B cell (primary cell): ENCODE measurements at regions of chr20 and their contacts with region 1.

Region 1: DNA sequence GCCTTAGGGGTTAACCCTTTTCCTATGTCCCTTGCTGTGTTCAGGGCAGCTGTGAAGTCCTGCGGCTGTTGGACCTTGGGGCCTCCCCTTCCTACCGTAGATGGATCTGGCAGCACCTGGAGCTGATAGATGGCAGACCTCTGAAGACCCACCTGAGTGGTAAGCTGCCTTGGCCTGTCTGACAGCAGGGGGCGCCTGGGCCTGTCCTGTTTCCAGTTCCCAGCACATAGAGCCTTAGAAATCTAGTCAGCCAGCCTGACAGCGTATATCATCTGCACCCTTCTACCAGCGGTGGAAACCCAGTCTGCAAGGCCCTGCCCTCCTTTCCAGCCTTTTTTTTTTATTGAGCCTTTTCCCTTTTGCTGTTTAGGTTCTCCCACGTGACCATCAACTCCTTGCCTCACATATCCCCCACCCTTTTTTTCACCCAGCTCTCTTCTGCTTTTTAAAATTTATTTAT is 26.6 kb downstream of the CNBD2 start:
- DNase-seq: peak; percentile 85
- ATAC-seq: peak; percentile 85
- H3K4me3 ChIP-seq: no peak overlapping the region
- H3K4me3 Mint-ChIP-seq: no peak overlapping the region
- H3K27ac ChIP-seq: no peak overlapping the region
- H3K27ac Mint-ChIP-seq: peak overlapping the region; percentile 69
- H3K4me1 ChIP-seq: peaks cover 4% of the 10 kb centered on the region in 2 donors
- H3K4me1 Mint-ChIP-seq: peaks cover 9% of the 10 kb centered on the region
- H3K27me3 ChIP-seq: peaks cover 0 to 5% (median 1%) of the 10 kb centered on the region in 4 experiments
- H3K27me3 Mint-ChIP-seq: peaks cover 6% of the 10 kb centered on the region
- CTCF ChIP-seq: peak; percentile 89

Region 2: DNA sequence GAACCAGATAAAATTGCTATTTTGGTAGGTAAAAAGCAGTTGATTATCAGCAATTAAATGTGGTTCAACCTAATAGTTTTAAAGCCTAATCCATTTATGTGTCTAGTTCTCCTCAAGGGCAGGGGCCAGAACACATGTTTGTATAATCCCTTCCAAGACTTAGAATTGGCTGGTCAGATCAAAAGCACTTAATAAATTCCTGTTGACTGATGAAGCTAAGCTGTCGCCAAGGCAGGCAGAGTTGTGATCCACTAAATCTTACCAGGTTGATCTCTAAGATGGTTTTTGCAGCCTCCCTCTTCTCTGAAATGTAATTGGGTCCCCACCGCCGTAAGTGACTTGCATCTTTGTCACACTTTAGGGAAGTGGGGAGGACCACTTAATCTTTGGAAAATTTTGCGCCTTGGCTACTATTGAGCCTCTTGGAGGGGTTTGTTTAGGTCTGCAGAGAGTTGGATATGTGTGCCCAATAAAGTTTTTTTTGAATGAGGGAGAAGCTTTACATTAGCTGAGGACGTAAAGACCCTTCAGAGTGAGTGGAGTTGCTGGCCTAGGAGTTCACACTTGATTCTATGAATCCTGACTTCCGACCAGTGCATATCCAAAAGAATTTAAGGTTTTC is 157.3 kb before region 1 on chr20:
- CTCF ChIA-PET with region 1: no interaction called
- POLR2A ChIA-PET with region 1: no interaction called
- intact Hi-C with region 1: no loop called
- DNase-seq: no peak
- ATAC-seq: no peak
- H3K4me3 ChIP-seq: no peak overlapping the region
- H3K4me3 Mint-ChIP-seq: no peak overlapping the region
- H3K27ac ChIP-seq: no peak overlapping the region
- H3K27ac Mint-ChIP-seq: no peak overlapping the region
- H3K4me1 ChIP-seq: no peaks in the 10 kb centered on the region
- H3K4me1 Mint-ChIP-seq: peaks cover 18% of the 10 kb centered on the region
- H3K27me3 ChIP-seq: no peaks in the 10 kb centered on the region
- H3K27me3 Mint-ChIP-seq: no peaks in the 10 kb centered on the region
- CTCF ChIP-seq: no peak

Region 3: DNA sequence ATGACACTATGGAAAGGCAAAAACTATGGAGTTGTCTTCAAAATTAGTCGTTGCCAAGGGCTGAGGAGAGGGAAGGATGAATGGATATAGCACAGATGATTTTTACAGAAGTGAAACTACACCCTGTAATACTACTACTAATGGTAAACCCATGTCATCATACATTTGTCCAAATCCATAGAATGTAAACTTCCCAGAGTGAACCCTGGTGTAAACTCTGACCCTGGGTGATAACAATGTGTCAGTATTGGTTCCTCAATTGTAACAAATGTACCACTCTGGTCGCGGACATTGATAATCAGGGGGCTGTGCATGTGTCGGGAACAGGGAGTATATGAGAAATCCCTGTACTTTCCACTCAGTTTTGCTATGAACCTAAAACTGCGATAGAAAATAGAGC is 45.5 kb after region 1 on chr20:
- CTCF ChIA-PET with region 1: interaction called, 12 read pairs
- POLR2A ChIA-PET with region 1: no interaction called
- intact Hi-C with region 1: no loop called
- DNase-seq: no peak
- ATAC-seq: no peak
- H3K4me3 ChIP-seq: no peak overlapping the region
- H3K4me3 Mint-ChIP-seq: no peak overlapping the region
- H3K27ac ChIP-seq: no peak overlapping the region
- H3K27ac Mint-ChIP-seq: no peak overlapping the region
- H3K4me1 ChIP-seq: no peaks in the 10 kb centered on the region
- H3K4me1 Mint-ChIP-seq: peaks cover 3% of the 10 kb centered on the region
- H3K27me3 ChIP-seq: no peaks in the 10 kb centered on the region
- H3K27me3 Mint-ChIP-seq: no peaks in the 10 kb centered on the region
- CTCF ChIP-seq: no peak

Region 4: GRCh38 chr20:36098364-36098763 is 103.3 kb after region 1 on chr20:
- CTCF ChIA-PET with region 1: interaction called, 11 read pairs
- POLR2A ChIA-PET with region 1: no interaction called
- intact Hi-C with region 1: no loop called
- DNase-seq: peak; percentile 82
- ATAC-seq: peak; percentile 76
- H3K4me3 ChIP-seq: no peak overlapping the region
- H3K4me3 Mint-ChIP-seq: peak overlapping the region; percentile 10
- H3K27ac ChIP-seq: peak overlapping the region in 1 of 2 donors; percentile 49
- H3K27ac Mint-ChIP-seq: peak overlapping the region; percentile 66
- H3K4me1 ChIP-seq: peaks cover 28 to 32% of the 10 kb centered on the region in 2 donors
- H3K4me1 Mint-ChIP-seq: peaks cover 29% of the 10 kb centered on the region
- H3K27me3 ChIP-seq: peaks cover 0 to 13% (median 7%) of the 10 kb centered on the region in 4 experiments
- H3K27me3 Mint-ChIP-seq: peaks cover 6% of the 10 kb centered on the region
- CTCF ChIP-seq: no peak

Region 5: GRCh38 chr20:36126836-36127527 is 132.0 kb after region 1 on chr20:
- CTCF ChIA-PET with region 1: interaction called, 848 read pairs
- POLR2A ChIA-PET with region 1: no interaction called
- intact Hi-C with region 1: no loop called
- DNase-seq: no peak
- ATAC-seq: no peak
- H3K4me3 ChIP-seq: no peak overlapping the region
- H3K4me3 Mint-ChIP-seq: no peak overlapping the region
- H3K27ac ChIP-seq: no peak overlapping the region
- H3K27ac Mint-ChIP-seq: no peak overlapping the region
- H3K4me1 ChIP-seq: peaks cover 0 to 8% of the 10 kb centered on the region in 2 donors
- H3K4me1 Mint-ChIP-seq: peaks cover 8% of the 10 kb centered on the region
- H3K27me3 ChIP-seq: no peaks in the 10 kb centered on the region
- H3K27me3 Mint-ChIP-seq: peaks cover 11% of the 10 kb centered on the region
- CTCF ChIP-seq: no peak

Region 6: GRCh38 chr20:36145877-36146707 is 151.1 kb after region 1 on chr20:
- CTCF ChIA-PET with region 1: interaction called, 848 read pairs
- POLR2A ChIA-PET with region 1: no interaction called
- intact Hi-C with region 1: no loop called
- DNase-seq: no peak
- ATAC-seq: no peak
- H3K4me3 ChIP-seq: no peak overlapping the region
- H3K4me3 Mint-ChIP-seq: no peak overlapping the region
- H3K27ac ChIP-seq: no peak overlapping the region
- H3K27ac Mint-ChIP-seq: no peak overlapping the region
- H3K4me1 ChIP-seq: peaks cover 13 to 14% of the 10 kb centered on the region in 2 donors
- H3K4me1 Mint-ChIP-seq: peaks cover 18% of the 10 kb centered on the region
- H3K27me3 ChIP-seq: peaks cover 0 to 8% (median 5%) of the 10 kb centered on the region in 4 experiments
- H3K27me3 Mint-ChIP-seq: peaks cover 16% of the 10 kb centered on the region
- CTCF ChIP-seq: no peak